ENCODE measurements at regions of chr1 and their contacts with region 1.

Region 1: GRCh38 chr1:32521165-32521564 is 18.1 kb upstream of the ZBTB8A start:
- DNase-seq: peak; percentile 41

Region 2: DNA sequence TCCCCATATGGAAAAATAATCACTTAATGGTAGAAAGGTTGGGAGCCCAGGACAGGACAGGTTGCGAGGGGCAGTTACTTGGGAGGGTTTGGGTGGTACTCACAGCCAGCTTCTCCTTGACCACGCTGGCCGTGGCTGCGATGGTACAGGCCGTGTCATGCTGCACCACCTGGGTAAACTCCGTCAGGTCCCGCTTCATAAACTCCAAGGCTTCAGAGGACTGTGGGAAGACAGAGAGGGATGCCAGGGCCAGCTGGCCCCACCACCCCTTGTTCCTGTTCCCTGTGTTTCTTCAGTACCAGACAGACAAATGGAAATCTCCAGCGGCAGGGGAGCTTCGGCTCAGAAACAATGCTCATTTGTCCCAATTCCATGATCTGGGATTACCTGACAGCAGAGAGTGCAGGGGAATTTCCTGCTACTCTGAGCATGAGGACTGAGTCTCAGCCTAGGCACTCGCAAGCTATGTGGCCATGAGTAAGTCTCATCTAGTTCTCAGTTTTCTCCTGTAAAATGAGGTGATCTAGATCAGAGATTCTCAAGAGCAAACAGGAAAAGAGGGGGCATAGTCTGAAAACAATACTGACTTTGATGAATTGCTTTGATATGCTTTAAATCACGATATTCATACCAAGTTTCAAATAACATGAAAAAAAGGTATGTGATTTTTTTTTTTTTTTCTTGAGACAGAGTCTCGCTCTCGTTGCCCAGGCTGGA is 134.3 kb before region 1 on chr1:
- CTCF ChIA-PET with region 1: no interaction called
- POLR2A ChIA-PET with region 1: no interaction called
- DNase-seq: no peak

Region 3: GRCh38 chr1:32448773-32449456 is 72.2 kb before region 1 on chr1:
- CTCF ChIA-PET with region 1: interaction called, 16 read pairs
- POLR2A ChIA-PET with region 1: interaction called, 4 read pairs
- DNase-seq: peak; percentile 82

Region 4: DNA sequence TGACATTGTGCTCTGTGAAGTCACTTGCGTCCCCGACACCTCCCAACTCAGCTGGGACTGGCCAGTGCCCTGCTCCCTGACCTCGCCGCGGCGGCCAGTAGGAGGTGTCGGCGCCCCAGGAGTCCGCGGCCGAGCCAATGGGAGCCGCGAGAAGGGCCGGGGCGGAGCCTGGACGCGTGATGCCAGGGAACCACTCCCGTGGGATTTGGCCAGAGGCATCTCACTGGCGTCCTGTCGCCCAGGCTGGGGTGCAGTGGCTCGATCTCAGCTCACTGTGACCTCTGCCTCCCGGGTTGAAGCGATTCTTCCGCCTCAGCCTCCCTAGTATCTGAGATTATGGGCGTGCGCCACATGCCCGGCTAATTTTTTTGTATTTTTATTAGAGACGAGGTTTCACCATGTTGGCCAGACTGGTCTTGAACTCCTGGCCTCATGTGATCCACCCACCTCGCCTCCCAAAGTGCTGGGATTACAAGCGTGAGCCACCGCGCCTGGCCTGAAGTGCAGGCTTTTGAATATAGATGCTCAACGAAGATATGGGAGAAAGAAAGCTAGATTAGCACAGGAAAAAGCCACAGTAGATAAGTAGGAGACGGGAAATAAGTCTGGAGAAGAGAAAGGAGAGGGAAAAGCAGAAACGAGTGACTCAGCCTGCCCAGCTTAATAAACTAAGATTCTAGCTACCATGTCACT is 91.2 kb after region 1 on chr1:
- CTCF ChIA-PET with region 1: interaction called, 6 read pairs
- POLR2A ChIA-PET with region 1: interaction called, 12 read pairs
- DNase-seq: peak; percentile 98

Region 5: DNA sequence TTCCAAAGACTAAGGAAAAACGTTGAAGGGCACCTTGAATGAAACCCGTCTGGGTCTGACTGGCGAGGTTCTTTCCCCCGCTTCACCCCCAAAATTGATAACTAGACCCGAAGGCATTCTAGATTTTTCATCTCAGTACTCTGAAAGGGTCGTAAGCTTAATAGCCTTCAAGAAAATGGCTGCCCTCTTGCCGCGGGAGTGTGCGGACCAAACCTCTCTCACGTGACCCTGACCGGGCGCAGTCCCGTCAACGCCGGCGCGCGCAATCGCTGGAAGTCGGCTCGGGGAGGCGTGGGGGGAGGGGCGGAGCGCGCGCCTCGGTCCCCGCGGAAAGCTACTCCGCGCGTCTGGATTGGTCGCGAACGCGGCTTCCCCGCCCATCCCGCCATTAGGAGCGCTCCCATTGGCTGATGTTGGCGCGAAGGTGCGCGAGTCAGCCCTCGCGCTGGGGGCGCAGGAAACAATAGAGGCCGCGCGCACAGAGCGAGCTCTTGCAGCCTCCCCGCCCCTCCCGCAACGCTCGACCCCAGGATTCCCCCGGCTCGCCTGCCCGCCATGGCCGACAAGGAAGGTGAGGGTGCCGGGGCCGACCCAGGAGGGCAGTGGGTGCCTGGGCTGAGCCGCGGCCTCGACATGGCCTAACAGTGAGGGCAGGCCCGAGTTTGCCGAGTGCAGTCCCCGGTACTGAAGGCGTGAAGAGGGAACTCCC is 129.7 kb after region 1 on chr1 and contains the start of gene RBBP4:
- CTCF ChIA-PET with region 1: interaction called, 3 read pairs
- POLR2A ChIA-PET with region 1: interaction called, 12 read pairs
- DNase-seq: peak; percentile 100

Region 6: DNA sequence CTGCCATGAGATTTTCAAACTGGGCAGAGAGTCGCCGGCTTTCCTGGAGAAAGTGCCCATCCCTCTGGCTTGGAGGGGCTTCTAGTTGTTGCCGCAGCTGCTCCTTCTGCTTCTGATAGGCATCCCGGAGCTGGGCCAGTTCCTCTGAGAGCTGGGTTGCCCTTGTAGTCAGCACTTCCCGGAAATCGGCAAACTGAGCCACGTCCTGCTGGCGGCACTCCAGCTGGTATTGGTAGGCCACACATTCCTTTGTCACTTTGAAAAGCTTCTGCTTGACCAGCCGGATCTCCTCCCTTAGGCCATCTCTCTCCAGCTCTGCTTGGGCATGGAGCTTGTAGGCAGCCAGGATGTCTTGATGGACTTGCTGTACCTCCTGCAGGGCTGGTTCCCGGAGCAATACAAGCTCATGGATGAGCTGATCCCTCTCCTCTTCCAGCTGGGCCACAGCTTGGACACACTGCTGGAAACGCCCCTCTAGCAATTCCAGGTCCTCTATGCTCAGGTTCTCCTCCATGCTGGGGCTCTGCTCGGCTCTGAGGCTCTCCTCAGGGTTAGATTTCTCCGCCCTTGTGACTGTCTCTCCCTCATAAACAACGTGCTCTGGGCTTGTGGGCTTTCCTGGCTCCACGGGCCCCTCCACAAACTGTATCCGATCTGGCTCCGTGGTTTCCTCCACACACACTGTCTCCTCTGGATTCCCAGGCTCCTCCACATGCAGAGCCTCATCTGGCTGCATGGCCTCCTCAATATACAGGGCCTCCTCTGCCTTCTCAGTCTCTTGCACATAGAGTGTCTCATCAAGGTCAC is 174.1 kb after region 1 on chr1:
- CTCF ChIA-PET with region 1: no interaction called
- POLR2A ChIA-PET with region 1: no interaction called
- DNase-seq: no peak

Measured in HEK293T (cell line).